Activated CD4-positive, alpha-beta memory T cell treated with anti-CD3 and anti-CD28 coated beads for 36 hours (primary cell): ENCODE measurements at regions of chr11 and their contacts with region 1.

Region 1: GRCh38 chr11:64000026-64000739 is 13.9 kb downstream of the OTUB1 start:
- DNase-seq: peak; percentile 79
- H3K4me3 Mint-ChIP-seq: no peak overlapping the region
- H3K27ac Mint-ChIP-seq: no peak overlapping the region
- H3K4me1 Mint-ChIP-seq: peaks cover 5% of the 10 kb centered on the region
- H3K27me3 Mint-ChIP-seq: no peaks in the 10 kb centered on the region

Region 2: GRCh38 chr11:63986156-63986931 is 13.8 kb before region 1 on chr11 and contains the start of gene OTUB1:
- CTCF ChIA-PET with region 1: interaction called, 28 read pairs
- POLR2A ChIA-PET with region 1: interaction called, 4 read pairs
- intact Hi-C with region 1: no loop called
- DNase-seq: peak; percentile 93
- H3K4me3 Mint-ChIP-seq: peak within 1 kb of the TSS; percentile 94
- H3K27ac Mint-ChIP-seq: peak within 1 kb of the TSS; percentile 91
- H3K4me1 Mint-ChIP-seq: peaks cover 20% of the 10 kb centered on the region
- H3K27me3 Mint-ChIP-seq: no peaks in the 10 kb centered on the region
- total RNA-seq, gene OTUB1: 69.5 to 72.2 TPM

Region 3: DNA sequence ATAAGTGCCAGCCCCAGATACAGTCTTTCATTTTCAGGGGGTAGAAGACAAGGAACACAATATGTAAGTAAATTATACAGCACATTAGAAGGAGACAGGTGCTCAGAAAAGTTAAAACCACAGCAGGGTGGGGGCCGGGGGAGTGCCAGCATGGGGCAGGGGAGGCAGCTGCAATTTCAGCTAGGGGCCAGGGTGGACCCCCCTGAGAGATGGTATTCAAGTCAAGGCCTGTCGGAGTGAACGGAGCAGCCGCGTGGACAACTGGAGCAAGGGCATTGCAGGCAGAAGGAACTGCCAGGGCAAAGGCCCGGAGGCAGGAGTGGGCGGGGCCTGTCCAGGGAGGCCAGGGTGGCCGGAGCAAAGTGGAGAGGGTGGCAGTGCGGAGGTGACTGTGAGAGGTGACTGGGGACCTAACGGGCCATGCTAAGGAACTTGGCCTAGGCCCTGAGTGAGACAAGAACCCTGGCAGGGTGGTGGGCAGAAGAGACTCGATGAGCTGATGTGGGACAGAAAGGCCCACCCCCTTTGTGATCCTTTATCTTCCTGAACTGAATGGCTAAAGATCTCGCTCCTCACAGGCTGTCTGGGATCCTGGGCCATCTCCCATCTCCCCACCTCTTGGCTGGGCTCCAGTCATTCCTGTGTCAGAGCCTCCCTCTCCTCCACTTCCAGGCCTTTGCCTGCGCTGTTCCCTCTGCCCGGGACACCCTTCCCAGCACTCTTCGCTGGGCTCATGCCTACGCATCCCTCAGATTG is 13.1 kb after region 1 on chr11:
- CTCF ChIA-PET with region 1: interaction called, 14 read pairs
- POLR2A ChIA-PET with region 1: interaction called, 3 read pairs
- intact Hi-C with region 1: no loop called
- DNase-seq: no peak
- H3K4me3 Mint-ChIP-seq: no peak overlapping the region
- H3K27ac Mint-ChIP-seq: no peak overlapping the region
- H3K4me1 Mint-ChIP-seq: no peaks in the 10 kb centered on the region
- H3K27me3 Mint-ChIP-seq: peaks cover 6% of the 10 kb centered on the region

Region 4: DNA sequence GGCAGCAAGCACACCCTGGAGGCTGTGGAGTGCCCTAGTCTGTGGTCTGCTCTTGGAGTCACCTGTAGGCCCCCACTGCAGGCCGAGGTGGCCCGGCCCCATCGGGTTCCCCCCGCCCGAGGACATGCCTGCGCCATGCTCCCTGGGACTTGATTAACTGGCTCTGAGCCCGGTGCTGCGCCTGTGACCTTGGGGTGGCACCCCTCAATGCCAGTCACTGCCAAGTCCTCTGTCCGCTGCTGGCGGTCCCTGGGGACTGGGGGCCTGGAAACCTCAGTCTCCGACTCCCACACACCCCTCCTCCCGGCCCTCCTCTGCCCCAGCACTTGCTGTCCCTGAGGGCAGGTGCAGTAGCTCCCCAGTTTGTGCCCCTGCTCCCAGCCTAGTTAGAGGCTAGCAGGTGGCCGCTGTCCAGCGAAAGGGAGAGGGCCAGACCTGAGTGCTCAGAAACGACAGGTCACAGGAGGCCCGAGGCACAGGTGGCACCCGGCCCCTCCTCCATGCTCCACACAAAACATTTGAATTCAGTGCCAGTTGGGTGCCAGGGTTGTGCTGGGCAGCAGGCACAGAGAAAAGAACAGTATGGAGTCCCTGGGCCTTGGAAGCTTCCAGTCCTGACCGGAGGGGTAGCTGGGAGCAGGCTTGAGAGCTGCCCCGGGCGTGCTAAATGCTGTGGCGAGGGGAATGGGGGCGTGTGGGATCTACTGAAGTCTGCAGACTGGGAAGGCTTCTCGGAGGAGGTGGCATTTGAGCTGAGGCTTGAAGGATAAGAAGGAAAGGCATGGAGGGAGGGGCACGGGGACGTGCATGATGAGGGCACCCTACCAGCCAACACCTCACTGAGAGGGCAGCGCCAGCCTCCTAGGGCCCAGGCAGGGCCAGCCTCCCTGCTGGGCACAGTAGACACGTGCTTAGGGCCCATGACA is 19.2 kb after region 1 on chr11:
- CTCF ChIA-PET with region 1: interaction called, 14 read pairs
- POLR2A ChIA-PET with region 1: interaction called, 3 read pairs
- intact Hi-C with region 1: no loop called
- DNase-seq: no peak
- H3K4me3 Mint-ChIP-seq: no peak overlapping the region
- H3K27ac Mint-ChIP-seq: no peak overlapping the region
- H3K4me1 Mint-ChIP-seq: no peaks in the 10 kb centered on the region
- H3K27me3 Mint-ChIP-seq: no peaks in the 10 kb centered on the region

Region 5: DNA sequence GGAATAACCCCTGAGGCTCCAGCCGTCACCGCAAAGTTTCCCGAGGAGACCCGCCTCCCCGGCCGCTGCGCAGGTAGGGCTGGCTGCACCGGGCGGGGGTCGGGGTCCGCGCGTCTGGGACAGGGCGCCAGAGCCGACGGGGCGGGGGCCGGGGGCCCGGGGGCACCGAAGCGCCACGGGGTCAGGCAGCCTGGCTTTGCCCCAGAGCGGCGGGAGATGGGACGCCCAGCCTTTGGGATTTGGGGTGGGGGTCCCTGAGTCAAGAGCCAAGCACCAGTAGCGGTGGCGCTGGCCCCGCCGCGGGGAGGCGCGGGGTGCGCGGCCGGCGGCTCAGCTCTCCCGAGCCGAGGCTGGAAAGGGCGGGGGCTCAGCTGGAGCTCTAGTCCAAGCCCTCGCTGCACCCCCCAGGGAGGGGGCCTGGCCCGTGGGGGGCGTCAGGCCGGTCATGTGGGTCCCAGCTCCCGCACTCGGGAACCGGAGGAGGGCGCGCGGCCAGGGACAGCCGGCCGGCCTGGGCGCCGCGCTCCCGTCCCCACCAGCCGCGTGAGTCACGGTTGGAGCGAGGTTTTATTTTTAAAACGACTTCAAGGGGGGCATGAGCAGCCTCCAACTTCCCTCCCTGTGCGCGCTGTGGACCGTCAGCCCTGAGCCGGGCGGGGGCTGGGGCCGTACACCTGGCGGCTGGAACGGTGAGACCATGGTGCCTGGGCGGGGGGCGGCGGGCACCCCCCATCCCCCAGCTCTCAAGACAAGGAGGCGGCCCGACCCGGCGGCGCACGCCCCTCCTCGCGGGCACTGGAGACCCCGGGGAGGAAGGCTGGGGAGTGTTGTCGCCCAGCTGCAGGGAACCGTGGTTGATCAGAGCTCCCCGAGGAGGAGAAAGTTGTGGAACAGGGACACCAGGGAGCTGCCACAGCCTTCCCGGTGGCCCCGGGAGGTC is 36.2 kb after region 1 on chr11:
- CTCF ChIA-PET with region 1: interaction called, 11 read pairs
- POLR2A ChIA-PET with region 1: no interaction called
- intact Hi-C with region 1: no loop called
- DNase-seq: no peak
- H3K4me3 Mint-ChIP-seq: no peak overlapping the region
- H3K27ac Mint-ChIP-seq: no peak overlapping the region
- H3K4me1 Mint-ChIP-seq: peaks cover 6% of the 10 kb centered on the region
- H3K27me3 Mint-ChIP-seq: peaks cover 38% of the 10 kb centered on the region

Region 6: DNA sequence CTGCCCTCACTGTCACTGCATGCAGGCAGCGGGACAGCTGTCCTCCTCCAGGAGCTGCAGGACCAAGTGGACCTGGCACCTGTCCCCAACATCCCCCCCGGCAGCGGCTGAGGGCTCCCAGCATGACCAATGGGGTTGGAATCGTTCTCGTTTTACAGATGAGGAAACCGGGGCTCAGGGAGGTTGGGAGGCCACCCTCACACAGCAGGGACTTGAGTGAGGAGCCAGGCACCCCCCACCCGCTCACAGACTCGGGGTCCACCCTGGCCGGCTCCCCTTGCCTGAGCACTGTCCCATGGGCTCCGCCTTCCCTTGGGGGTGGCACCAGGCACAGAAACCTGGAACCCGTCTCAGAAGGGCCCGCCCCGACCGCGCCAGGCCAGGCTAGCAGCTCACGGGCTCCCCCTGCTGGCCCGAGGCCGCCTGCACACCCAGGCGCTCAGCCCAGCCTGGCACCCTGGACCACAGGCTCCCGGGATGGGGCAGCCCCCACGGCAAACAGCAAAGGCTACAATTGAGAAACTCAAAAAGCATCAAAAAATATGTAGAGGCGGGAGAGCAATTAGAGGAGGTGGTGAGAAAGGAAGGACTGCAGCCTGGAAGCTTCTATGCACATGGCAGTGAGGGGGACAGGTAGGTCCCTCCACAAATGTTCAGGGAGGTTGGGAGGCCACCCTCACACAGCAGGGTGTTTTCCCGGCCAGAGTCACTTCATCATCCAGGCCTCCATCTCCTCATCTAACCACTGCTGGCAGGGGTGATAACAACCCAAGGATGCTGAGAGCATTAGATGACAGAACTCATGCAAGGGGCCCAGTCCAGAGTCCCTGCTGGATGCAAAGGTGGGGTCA is 152.9 kb after region 1 on chr11:
- CTCF ChIA-PET with region 1: interaction called, 145 read pairs
- POLR2A ChIA-PET with region 1: interaction called, 4 read pairs
- intact Hi-C with region 1: loop called (anchors 1 kb)
- DNase-seq: peak; percentile 78
- H3K4me3 Mint-ChIP-seq: no peak overlapping the region
- H3K27ac Mint-ChIP-seq: no peak overlapping the region
- H3K4me1 Mint-ChIP-seq: peaks cover 3% of the 10 kb centered on the region
- H3K27me3 Mint-ChIP-seq: no peaks in the 10 kb centered on the region

Region 7: DNA sequence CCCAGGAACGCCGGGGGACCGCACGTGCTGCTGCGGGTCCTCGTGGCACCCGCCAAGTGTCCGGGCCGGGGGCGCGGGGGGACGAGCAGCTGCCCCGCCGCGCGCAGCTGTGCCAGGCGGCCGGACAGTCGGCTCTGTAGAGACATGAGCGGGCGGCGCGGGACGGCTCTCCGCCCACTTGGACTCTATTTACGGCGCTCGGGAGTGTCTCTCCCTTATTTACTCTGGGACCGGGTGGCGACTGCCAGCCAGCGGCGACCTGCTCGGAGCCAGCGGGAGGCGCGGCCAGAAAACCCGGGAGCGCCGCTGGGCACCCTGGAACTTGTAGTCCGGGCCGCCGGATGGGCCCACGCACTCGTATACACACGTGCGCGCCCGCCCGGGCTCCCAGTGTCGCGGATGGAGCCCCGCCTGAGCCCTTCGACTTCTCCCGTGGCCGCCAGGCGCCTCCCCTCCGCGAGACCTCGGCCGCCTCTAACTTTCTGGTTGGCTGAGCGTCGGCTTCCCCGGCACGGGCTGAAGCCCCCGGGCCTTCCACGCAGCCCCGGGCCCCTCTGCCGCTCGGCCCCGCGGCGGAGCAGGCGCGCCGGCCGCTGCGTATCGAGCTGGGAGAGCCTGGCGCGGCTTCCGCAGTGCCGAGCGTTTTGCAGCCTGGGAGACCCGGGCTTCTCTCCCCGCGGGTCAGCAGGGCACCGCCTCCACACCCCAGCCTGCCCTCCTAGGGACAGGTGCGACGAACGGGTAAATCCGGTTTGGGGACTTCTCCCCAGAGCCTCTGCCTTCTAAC is 165.9 kb after region 1 on chr11 and contains the start of gene MACROD1:
- CTCF ChIA-PET with region 1: interaction called, 10 read pairs
- POLR2A ChIA-PET with region 1: no interaction called
- intact Hi-C with region 1: no loop called
- DNase-seq: peak; percentile 88
- H3K4me3 Mint-ChIP-seq: peak within 1 kb of the TSS; percentile 87
- H3K27ac Mint-ChIP-seq: peak within 1 kb of the TSS; percentile 74
- H3K4me1 Mint-ChIP-seq: peaks cover 15% of the 10 kb centered on the region
- H3K27me3 Mint-ChIP-seq: no peaks in the 10 kb centered on the region
- total RNA-seq, gene MACROD1: 24.5 to 31.0 TPM